Body of pancreas (tissue), 4 donors: ENCODE measurements at regions of chr3 and their contacts with region 1.

Region 1: GRCh38 chr3:88203642-88204055 is 53.9 kb downstream of the C3orf38 start:
- DNase-seq: peak; percentile 66 to 82 (median 74)
- ATAC-seq: peak; percentile 90
- H3K4me3 ChIP-seq: no peak overlapping the region
- H3K27ac ChIP-seq: no peak overlapping the region
- H3K4me1 ChIP-seq: no peaks in the 10 kb centered on the region
- H3K27me3 ChIP-seq: no peaks in the 10 kb centered on the region
- CTCF ChIP-seq: peak; percentile 75 to 84 (median 78)
- POLR2A ChIP-seq: no peak

Region 2: DNA sequence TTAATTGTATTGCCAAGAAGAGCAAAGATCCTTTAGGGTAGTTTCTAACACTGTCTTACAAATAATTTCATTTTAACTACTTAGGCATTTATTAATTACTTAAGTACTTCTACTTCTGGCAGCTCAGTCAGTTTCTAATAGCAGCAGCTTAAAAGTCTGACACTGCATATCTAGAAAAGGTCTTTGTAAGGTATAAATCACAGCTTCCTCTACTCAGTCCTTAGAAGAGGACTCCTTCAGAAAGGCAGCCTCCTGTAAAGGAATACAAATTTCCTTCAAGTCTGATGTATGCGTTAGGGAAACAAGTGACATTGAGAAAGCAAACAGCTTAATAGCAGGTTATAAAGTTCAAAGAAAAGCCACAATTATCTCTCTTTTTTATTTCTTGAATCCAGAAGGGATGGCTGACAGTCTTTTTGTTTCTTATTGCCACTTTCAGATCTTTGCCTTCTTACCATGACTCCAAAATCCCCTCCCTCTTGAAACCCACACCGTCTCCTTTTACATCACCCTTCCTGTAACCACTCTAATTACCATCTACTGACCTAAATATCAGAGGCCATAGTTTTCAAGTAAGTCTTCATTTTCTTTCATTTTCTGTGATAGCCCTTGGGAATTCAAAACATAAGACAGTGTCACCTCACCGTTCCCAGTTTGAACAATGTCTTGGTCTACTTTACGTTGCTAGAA is 254.3 kb before region 1 on chr3:
- intact Hi-C with region 1: no loop called
- DNase-seq: no peak
- ATAC-seq: no peak
- H3K4me3 ChIP-seq: no peak overlapping the region
- H3K27ac ChIP-seq: no peak overlapping the region
- H3K4me1 ChIP-seq: no peaks in the 10 kb centered on the region
- H3K27me3 ChIP-seq: no peaks in the 10 kb centered on the region
- CTCF ChIP-seq: no peak
- POLR2A ChIP-seq: no peak

Region 3: DNA sequence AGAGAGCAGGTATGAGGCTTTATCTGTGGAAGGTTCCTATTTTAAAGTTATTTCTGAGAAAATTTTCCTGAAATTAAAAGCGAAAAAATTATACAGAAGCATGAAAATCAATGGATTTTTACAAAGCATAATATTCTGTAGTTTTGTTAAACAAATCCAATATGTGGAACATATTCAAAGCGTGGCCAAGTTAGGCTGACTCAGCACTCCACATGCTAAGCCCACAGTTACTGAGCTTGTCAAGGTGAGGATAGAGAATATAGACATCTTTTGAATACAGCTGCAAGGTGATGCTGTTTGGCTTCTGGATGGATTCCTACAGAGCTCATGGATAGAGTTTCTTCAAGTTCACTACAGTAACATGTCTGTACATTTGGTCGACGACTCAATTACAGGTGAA is 248.6 kb after region 1 on chr3:
- intact Hi-C with region 1: no loop called
- DNase-seq: no peak
- ATAC-seq: no peak
- H3K4me3 ChIP-seq: no peak overlapping the region
- H3K27ac ChIP-seq: no peak overlapping the region
- H3K4me1 ChIP-seq: no peaks in the 10 kb centered on the region
- H3K27me3 ChIP-seq: no peaks in the 10 kb centered on the region
- CTCF ChIP-seq: no peak
- POLR2A ChIP-seq: no peak

Region 4: GRCh38 chr3:90184861-90185260 is 1981.2 kb after region 1 on chr3:
- intact Hi-C with region 1: loop called (anchors 10 kb)
- DNase-seq: no peak
- ATAC-seq: no peak
- H3K4me3 ChIP-seq: no peak overlapping the region
- H3K27ac ChIP-seq: no peak overlapping the region
- H3K4me1 ChIP-seq: no peaks in the 10 kb centered on the region
- H3K27me3 ChIP-seq: no peaks in the 10 kb centered on the region
- CTCF ChIP-seq: no peak
- POLR2A ChIP-seq: no peak